ENCODE measurements at regions of chr10 and their contacts with region 1.

Region 1: DNA sequence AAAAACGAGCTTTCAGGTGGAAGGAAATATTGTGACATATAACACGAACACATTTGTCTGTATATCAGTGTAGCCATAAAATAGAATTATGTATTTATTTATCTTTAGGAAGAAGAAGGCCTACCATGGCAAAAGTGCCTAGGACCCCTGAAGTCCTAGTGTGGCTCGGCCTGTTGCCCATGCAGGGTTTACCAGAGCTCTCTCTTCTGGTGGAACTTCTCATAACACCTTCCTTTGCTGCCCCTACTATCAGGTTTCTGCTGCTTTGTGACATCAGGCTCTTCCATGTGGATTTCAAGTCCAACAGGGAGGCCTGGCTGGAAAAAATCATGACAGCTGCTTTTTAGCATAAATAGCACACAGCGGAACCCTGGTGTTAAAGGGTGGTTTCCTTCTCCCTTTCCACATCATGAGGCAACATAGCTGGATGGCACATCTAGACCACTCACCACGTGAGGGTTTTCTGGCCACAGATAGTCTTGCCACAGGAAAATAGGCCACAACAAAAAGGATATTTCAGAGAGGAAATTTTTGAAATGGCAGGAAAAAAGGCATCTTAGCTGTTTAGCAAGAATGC is 44.8 kb upstream of the ADO start:
- DNase-seq: no peak
- ATAC-seq: peak; percentile 49
- H3K4me3 ChIP-seq: no peak overlapping the region
- H3K4me3 Mint-ChIP-seq: no peak overlapping the region
- H3K27ac ChIP-seq: no peak overlapping the region
- H3K27ac Mint-ChIP-seq: no peak overlapping the region
- H3K4me1 ChIP-seq: peaks cover 15 to 20% of the 10 kb centered on the region in 2 donors
- H3K4me1 Mint-ChIP-seq: peaks cover 17 to 27% (median 20%) of the 10 kb centered on the region in 7 donors
- H3K27me3 ChIP-seq: no peaks in the 10 kb centered on the region
- H3K27me3 Mint-ChIP-seq: peaks cover 0 to 3% (median 0%) of the 10 kb centered on the region in 5 donors

Region 2: DNA sequence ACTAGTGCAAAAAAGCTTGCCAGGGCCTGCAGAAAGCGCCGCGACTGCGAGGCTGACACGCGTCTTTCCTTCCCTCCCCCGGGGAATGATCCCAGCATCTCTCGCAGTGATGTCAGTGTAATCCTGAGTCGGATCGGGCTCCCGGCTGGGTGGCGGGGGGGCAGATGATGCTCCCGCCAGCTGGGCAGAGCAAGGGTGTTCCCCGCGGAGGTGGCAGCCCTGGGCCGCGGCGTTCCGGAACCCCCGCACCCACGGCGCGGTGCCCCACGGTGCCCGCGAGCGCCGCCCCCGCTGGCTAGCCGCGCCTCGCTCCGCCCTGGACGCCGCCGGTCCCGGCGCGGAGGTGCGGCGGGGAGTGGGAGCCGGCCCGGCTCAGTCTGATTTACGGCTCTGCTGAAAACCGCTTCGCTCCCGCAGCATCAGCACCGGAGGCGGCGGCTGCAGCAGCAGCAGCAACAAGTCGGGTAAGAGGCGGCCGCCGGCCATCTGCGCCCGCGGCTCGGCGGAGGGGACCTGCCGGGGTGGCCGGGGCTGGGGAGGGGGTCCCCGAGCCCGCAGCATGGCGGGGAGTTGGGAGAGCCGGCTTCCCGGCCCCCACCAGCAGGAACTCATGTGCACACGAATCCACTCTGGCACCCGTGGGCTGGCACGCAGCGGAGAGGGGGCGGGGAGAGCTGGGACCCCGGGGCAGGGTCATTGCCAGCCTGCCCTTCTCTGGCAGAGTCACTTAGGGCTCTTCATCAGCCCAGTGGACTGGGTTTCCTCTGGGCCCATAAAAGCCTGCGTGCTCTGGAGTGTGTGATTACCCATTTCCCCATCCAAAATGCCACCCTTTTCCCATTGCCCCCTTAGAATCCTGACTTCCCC is 385.5 kb before region 1 on chr10 and contains the start of gene ZNF365:
- CTCF ChIA-PET with region 1: no interaction called
- POLR2A ChIA-PET with region 1: no interaction called
- intact Hi-C with region 1: no loop called
- DNase-seq: peak in 8 of 9 donors; percentile 5 to 51 (median 22)
- ATAC-seq: peak; percentile 85
- H3K4me3 ChIP-seq: peak within 1 kb of the TSS; percentile 54
- H3K4me3 Mint-ChIP-seq: peak within 1 kb of the TSS; percentile 71 to 85 (median 78)
- H3K27ac ChIP-seq: no peak within 1 kb of the TSS
- H3K27ac Mint-ChIP-seq: peak within 1 kb of the TSS in 1 of 9 donors; percentile 65
- H3K4me1 ChIP-seq: peaks cover 3 to 18% of the 10 kb centered on the region in 2 donors
- H3K4me1 Mint-ChIP-seq: peaks cover 0 to 9% (median 7%) of the 10 kb centered on the region in 7 donors
- H3K27me3 ChIP-seq: no peaks in the 10 kb centered on the region
- H3K27me3 Mint-ChIP-seq: peaks cover 15 to 48% (median 31%) of the 10 kb centered on the region in 5 donors
- total RNA-seq, gene ZNF365: 0.08 to 2.9 (median 0.28) TPM in 4 of 5 experiments, not detected in the other

Region 3: GRCh38 chr10:62726142-62726541 is 33.5 kb before region 1 on chr10:
- CTCF ChIA-PET with region 1: no interaction called
- POLR2A ChIA-PET with region 1: no interaction called
- intact Hi-C with region 1: no loop called
- DNase-seq: peak in 1 of 9 donors; percentile 67
- ATAC-seq: no peak
- H3K4me3 ChIP-seq: no peak overlapping the region
- H3K4me3 Mint-ChIP-seq: no peak overlapping the region
- H3K27ac ChIP-seq: no peak overlapping the region
- H3K27ac Mint-ChIP-seq: no peak overlapping the region
- H3K4me1 ChIP-seq: peaks cover 0 to 6% of the 10 kb centered on the region in 2 donors
- H3K4me1 Mint-ChIP-seq: peaks cover 0 to 53% (median 0%) of the 10 kb centered on the region in 7 donors
- H3K27me3 ChIP-seq: no peaks in the 10 kb centered on the region
- H3K27me3 Mint-ChIP-seq: peaks cover 0 to 22% (median 0%) of the 10 kb centered on the region in 5 donors

Region 4: DNA sequence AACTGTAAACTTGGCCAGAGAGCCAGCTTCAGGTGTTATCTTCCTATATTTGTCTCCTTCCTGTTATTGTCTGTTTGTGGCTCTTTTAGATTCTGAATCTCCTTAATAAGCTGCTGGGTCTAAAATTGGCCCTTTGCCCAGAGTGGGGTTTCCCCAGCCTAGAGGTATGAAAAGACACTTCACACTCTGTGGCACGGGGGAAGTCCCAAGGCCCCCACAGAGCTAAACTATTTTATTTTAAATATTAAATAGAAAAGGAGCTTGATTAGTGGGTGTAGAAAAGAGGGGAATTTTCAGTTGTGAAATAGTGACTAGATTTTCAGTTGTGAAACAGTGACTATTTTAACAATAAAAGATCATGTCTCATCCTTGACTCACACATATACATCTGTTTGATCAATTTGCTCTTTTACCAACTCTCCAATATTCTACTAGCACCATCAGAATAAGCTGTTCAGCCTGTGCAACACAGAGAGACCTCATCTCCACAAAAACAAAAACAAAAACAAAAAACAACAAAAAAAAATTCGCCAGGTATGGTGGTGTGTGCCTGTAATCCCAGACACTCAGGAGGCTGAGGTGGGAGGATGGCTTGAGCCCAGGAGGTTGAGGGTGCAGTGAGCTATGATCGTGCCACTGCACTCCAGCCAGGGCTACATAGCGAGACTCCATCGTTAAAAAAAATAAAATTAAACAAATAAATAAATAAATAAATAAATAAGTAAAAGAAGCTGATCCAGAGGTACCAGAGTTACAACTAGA is 20.0 kb after region 1 on chr10:
- CTCF ChIA-PET with region 1: interaction called, 3 read pairs
- POLR2A ChIA-PET with region 1: interaction called, 3 read pairs
- intact Hi-C with region 1: loop called in 1 of 2 experiments (anchors 2 kb)
- DNase-seq: peak; percentile 35 to 88 (median 75)
- ATAC-seq: peak; percentile 97
- H3K4me3 ChIP-seq: no peak overlapping the region
- H3K4me3 Mint-ChIP-seq: peak overlapping the region; percentile 0 to 71 (median 52)
- H3K27ac ChIP-seq: no peak overlapping the region
- H3K27ac Mint-ChIP-seq: peak overlapping the region in 6 of 9 donors; percentile 0 to 79 (median 8)
- H3K4me1 ChIP-seq: peaks cover 13 to 15% of the 10 kb centered on the region in 2 donors
- H3K4me1 Mint-ChIP-seq: peaks cover 10 to 22% (median 17%) of the 10 kb centered on the region in 7 donors
- H3K27me3 ChIP-seq: no peaks in the 10 kb centered on the region
- H3K27me3 Mint-ChIP-seq: peaks cover 0 to 38% (median 0%) of the 10 kb centered on the region in 5 donors

Region 5: GRCh38 chr10:62804356-62805230 is 44.9 kb after region 1 on chr10 and contains the start of gene ADO:
- CTCF ChIA-PET with region 1: no interaction called
- POLR2A ChIA-PET with region 1: interaction called, 6 read pairs
- intact Hi-C with region 1: loop called in 1 of 2 experiments (anchors 2 kb)
- DNase-seq: peak; percentile 69 to 86 (median 80)
- ATAC-seq: peak; percentile 93
- H3K4me3 ChIP-seq: peak within 1 kb of the TSS; percentile 66
- H3K4me3 Mint-ChIP-seq: peak within 1 kb of the TSS; percentile 90 to 100 (median 96)
- H3K27ac ChIP-seq: peak within 1 kb of the TSS; percentile 86
- H3K27ac Mint-ChIP-seq: peak within 1 kb of the TSS; percentile 93 to 100 (median 98)
- H3K4me1 ChIP-seq: peaks cover 15 to 19% of the 10 kb centered on the region in 2 donors
- H3K4me1 Mint-ChIP-seq: peaks cover 22 to 47% (median 39%) of the 10 kb centered on the region in 7 donors
- H3K27me3 ChIP-seq: no peaks in the 10 kb centered on the region
- H3K27me3 Mint-ChIP-seq: peaks cover 0 to 20% (median 0%) of the 10 kb centered on the region in 5 donors
- total RNA-seq, gene ADO: 9.8 to 21.3 (median 15.6) TPM

Region 6: DNA sequence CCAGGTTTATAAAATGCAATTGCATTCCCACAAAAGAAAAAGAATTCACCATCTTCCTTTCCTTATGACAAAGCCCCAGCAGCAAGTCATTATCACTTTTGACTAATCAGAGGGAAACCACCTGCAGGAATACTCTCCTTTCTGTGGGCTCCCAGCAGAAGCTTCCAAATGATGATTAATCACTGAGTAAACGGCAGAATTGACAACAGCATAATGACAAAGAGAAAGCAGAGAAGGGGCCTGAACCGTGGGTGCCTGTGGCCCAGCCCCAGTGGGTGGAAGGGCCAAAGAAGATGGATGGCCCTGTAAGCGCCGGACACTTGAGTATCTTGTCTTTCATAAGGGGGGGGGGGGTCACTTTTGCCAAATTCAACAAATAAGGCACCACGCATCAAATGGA is 221.0 kb after region 1 on chr10:
- CTCF ChIA-PET with region 1: no interaction called
- POLR2A ChIA-PET with region 1: no interaction called
- intact Hi-C with region 1: no loop called
- DNase-seq: peak in 1 of 9 donors; percentile 40
- ATAC-seq: no peak
- H3K4me3 ChIP-seq: no peak overlapping the region
- H3K4me3 Mint-ChIP-seq: no peak overlapping the region
- H3K27ac ChIP-seq: no peak overlapping the region
- H3K27ac Mint-ChIP-seq: no peak overlapping the region
- H3K4me1 ChIP-seq: no peaks in the 10 kb centered on the region
- H3K4me1 Mint-ChIP-seq: peaks cover 0 to 4% (median 0%) of the 10 kb centered on the region in 7 donors
- H3K27me3 ChIP-seq: no peaks in the 10 kb centered on the region
- H3K27me3 Mint-ChIP-seq: peaks cover 0 to 10% (median 0%) of the 10 kb centered on the region in 5 donors

Region 7: GRCh38 chr10:63614371-63614891 is 854.7 kb after region 1 on chr10:
- CTCF ChIA-PET with region 1: no interaction called
- POLR2A ChIA-PET with region 1: no interaction called
- intact Hi-C with region 1: loop called in 1 of 2 experiments (anchors 5 kb)
- DNase-seq: no peak
- ATAC-seq: no peak
- H3K4me3 ChIP-seq: no peak overlapping the region
- H3K4me3 Mint-ChIP-seq: no peak overlapping the region
- H3K27ac ChIP-seq: no peak overlapping the region
- H3K27ac Mint-ChIP-seq: peak overlapping the region in 3 of 9 donors; percentile 6 to 43 (median 6)
- H3K4me1 ChIP-seq: no peaks in the 10 kb centered on the region
- H3K4me1 Mint-ChIP-seq: peaks cover 0 to 8% (median 0%) of the 10 kb centered on the region in 7 donors
- H3K27me3 ChIP-seq: no peaks in the 10 kb centered on the region
- H3K27me3 Mint-ChIP-seq: no peaks in the 10 kb centered on the region